Sigmoid colon (tissue), 7 donors: ENCODE measurements at regions of chr19 and their contacts with region 1.

Region 1: GRCh38 chr19:45079063-45079910 is at the start of gene GEMIN7:
- DNase-seq: peak; percentile 87
- H3K4me3 ChIP-seq: peak within 1 kb of the TSS; percentile 71 to 91 (median 86)
- H3K27ac ChIP-seq: peak within 1 kb of the TSS; percentile 73 to 80 (median 78)
- H3K4me1 ChIP-seq: peaks cover 0 to 41% (median 35%) of the 10 kb centered on the region in 4 donors
- H3K27me3 ChIP-seq: no peaks in the 10 kb centered on the region
- CTCF ChIP-seq: peak in 1 of 4 experiments; percentile 10
- EP300 ChIP-seq: no peak
- POLR2A ChIP-seq: no peak
- total RNA-seq, gene GEMIN7: 10.3 to 18.2 (median 16.2) TPM

Region 2: GRCh38 chr19:45245334-45245787 is 166.1 kb after region 1 on chr19 and contains the start of gene EXOC3L2:
- intact Hi-C with region 1: loop called (anchors 5 kb)
- DNase-seq: no peak
- H3K4me3 ChIP-seq: peak within 1 kb of the TSS in 1 of 4 donors; percentile 3
- H3K27ac ChIP-seq: peak within 1 kb of the TSS in 1 of 4 donors; percentile 27
- H3K4me1 ChIP-seq: peaks cover 0 to 14% (median 9%) of the 10 kb centered on the region in 4 donors
- H3K27me3 ChIP-seq: no peaks in the 10 kb centered on the region
- CTCF ChIP-seq: no peak
- EP300 ChIP-seq: no peak
- POLR2A ChIP-seq: no peak
- total RNA-seq, gene EXOC3L2: 0.14 to 0.33 TPM in 2 of 4 donors, not detected in the others